Posterior vena cava (tissue), 2 donors: ENCODE measurements at regions of chr3 and their contacts with region 1.

Region 1: DNA sequence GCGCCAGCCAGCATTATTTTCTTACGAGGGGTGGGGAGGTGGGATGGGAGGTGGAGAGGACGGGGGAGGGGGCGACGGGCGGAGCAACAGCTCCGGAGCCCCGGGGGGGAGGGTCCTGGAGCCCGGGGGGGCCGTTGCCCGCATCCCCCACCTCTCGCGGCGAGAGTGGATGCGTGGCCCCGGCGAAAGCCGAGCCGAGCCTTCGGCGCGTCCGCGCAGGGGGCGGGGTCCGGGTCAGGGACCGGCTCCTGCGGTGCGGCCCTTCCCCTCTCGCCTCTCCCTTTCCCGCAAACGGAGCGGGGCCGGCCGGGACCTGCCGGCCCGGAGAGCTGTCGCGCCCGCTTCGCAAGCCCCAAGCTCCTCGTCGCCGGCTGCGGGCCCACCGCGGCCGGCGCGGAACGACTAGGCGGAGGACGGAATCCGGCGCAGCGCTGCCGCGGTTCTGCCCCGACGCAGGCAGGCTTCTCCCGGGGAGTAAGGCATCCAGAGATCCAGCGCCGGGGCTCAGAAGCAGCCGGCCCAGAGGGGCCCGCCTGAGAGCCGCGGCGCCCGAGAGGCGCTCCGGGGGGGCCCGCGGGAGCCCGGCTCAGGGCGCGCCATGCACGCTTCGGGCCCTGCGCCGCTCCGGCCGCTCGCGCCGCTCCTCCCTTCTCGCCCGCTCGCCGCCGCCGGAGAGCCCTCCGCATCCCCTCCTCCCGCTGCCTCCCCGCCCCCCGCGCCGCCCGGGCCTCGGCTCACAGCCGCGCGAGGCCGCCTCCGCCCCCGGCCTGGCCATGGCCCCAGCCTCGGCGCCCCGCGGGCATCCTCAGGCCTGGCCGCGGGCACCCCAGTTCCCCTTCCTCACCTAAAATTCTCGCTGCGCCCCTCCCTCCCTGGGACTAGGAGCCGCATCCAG is 459 bp upstream of the ADCY5 start:
- DNase-seq: no peak

Region 2: DNA sequence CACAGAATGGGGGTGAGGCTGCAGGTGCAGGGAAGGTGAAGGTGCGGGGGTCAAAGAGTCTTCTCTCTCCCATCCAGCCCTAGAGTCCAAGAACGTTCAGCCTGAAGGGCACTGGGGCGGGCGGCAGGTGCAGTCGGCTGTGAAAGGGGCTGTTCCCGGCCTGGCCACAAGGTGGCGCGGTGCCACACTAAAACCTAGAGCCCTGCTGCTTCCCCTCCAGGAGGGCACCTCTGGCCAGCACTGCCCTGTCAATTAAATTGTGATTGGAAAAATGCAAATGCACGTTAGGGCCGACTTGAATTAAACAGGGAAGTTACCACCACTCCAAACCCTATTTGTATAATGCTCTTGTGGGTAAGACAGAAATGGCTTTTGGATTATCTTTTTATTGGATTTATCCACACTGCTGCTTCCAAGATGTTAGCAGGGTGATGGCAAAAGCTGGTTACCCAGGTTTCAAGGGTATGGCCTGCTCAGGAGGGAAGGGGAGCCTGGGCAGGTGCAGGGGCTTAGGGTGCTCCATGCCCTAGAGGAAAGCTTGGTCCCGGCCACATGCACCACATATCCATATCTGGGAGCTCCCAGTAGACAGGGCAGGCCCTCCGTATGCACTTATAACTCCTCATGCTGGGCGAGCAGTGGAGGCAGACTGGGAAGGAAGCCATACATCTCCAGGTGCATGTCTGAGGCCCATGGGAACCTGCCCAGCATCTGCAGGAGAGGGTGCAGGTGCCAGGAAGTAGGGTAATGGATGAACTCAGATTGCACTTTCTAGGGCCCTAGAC is 120.3 kb before region 1 on chr3:
- intact Hi-C with region 1: loop called (anchors 5 to 10 kb)
- DNase-seq: peak; percentile 93

Region 3: DNA sequence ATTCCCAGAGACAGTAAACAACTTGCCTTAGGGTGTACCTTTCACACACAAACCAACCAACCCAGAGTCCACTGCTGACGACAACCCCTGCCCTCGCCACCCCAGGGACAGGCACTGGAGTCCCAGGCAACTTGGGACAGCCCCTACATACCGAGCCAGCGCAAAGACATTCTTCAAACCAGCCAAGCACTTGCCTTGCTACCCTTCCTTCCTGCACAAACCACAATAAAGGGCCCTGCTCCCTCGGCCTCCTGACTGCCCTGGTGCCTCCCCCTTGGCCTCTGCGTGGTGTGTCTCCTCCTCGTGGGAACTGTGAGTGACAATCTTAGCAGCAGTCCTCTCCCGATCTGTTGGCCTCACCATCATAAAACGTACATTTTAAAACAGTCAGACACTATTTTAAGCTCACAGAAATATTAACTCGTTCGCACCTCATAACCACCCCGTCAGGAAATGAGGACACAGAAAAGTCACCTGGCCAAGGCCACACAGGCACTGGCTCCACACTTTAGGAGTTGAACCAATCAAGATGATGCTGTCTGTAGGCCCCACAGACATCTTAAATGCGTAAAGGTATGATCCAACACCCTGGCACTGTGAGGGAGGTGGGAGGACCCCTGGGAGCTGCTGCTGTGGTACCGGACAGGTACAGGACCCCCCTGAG is 114.2 kb before region 1 on chr3:
- intact Hi-C with region 1: loop called (anchors 5 to 10 kb)
- DNase-seq: peak; percentile 46

Region 4: GRCh38 chr3:123412811-123413604 is 36.3 kb before region 1 on chr3:
- intact Hi-C with region 1: loop called in 1 of 2 experiments (anchors 5 kb)
- DNase-seq: no peak

Region 5: DNA sequence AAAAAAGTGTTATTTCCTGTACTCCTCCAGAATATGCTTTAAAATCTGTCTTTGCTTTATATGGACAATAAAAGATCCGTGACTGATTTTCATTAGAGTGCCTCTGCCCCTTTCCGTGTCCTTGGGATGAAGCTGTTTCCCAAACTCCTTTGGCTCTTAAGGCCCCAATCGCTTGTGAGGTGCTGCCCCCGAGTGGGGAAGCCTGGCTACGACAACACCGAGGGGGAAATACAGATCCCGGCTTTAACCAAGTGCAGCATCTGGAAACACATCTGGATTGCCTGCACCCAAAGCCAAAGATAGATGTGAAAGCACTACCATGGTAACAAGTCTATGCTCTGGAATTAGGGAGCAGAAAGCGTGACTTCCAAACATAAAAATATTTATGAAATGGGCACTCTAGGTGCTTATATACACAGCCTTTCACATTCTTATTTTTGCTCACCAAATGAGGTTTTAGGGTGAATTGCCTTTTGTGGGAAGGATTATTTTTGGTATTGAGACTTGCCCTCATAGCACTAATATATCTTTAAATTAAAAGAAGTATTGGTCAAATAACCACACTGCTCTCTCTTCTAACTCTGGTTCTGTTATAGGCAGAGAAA is 40.2 kb after region 1 on chr3:
- intact Hi-C with region 1: loop called in 1 of 2 experiments (anchors 5 kb)
- DNase-seq: peak; percentile 91